ENCODE measurements at regions of chr10 and their contacts with region 1.

Region 1: GRCh38 chr10:72088889-72089575 is 681 bp upstream of the SPOCK2 start:
- DNase-seq: peak in 1 of 5 donors; percentile 78
- H3K4me3 ChIP-seq: peak overlapping the region; percentile 82 to 98
- H3K4me3 Mint-ChIP-seq: peak overlapping the region; percentile 97 to 100 (median 100)
- H3K27ac ChIP-seq: peak overlapping the region; percentile 94
- H3K27ac Mint-ChIP-seq: peak overlapping the region; percentile 97 to 100 (median 100)
- H3K4me1 ChIP-seq: peaks cover 48% of the 10 kb centered on the region
- H3K4me1 Mint-ChIP-seq: peaks cover 31 to 58% (median 43%) of the 10 kb centered on the region in 4 donors
- H3K27me3 ChIP-seq: no peaks in the 10 kb centered on the region
- H3K27me3 Mint-ChIP-seq: peaks cover 0 to 2% of the 10 kb centered on the region in 2 donors

Region 2: DNA sequence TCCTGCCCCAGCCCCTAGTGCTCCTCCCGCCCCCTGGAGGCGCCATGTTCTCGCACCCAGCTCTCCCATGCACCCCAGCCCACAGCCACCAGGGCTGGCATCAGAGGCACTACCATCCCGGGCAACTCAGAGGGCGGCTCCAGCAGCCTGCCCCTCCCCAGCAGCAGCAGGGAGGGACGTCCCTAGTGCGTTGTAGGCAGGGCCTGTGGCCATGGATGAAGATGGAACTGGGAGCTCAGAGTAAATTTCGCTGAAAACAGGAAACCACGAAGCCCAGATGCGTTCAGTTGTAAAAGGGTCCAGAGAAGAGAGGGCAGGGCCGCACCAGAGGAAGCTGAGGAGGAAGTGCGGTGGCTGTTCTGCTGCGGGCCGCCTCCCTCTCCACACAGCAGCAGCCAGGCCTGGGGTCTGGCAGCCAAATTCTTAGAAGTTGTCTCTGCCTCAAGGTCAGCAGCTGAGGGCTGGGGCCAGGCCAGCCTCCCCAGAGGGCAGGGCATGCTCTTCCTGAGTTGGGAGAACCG is 340.3 kb before region 1 on chr10:
- CTCF ChIA-PET with region 1: no interaction called
- POLR2A ChIA-PET with region 1: no interaction called
- intact Hi-C with region 1: loop called (anchors 10 kb)
- DNase-seq: peak; percentile 86 to 90 (median 87)
- H3K4me3 ChIP-seq: peak overlapping the region in 1 of 2 donors; percentile 39
- H3K4me3 Mint-ChIP-seq: peak overlapping the region; percentile 76 to 89 (median 84)
- H3K27ac ChIP-seq: peak overlapping the region; percentile 58
- H3K27ac Mint-ChIP-seq: peak overlapping the region; percentile 92 to 99 (median 98)
- H3K4me1 ChIP-seq: peaks cover 100% of the 10 kb centered on the region
- H3K4me1 Mint-ChIP-seq: peaks cover 74 to 98% (median 92%) of the 10 kb centered on the region in 4 donors
- H3K27me3 ChIP-seq: no peaks in the 10 kb centered on the region
- H3K27me3 Mint-ChIP-seq: no peaks in the 10 kb centered on the region

Region 3: DNA sequence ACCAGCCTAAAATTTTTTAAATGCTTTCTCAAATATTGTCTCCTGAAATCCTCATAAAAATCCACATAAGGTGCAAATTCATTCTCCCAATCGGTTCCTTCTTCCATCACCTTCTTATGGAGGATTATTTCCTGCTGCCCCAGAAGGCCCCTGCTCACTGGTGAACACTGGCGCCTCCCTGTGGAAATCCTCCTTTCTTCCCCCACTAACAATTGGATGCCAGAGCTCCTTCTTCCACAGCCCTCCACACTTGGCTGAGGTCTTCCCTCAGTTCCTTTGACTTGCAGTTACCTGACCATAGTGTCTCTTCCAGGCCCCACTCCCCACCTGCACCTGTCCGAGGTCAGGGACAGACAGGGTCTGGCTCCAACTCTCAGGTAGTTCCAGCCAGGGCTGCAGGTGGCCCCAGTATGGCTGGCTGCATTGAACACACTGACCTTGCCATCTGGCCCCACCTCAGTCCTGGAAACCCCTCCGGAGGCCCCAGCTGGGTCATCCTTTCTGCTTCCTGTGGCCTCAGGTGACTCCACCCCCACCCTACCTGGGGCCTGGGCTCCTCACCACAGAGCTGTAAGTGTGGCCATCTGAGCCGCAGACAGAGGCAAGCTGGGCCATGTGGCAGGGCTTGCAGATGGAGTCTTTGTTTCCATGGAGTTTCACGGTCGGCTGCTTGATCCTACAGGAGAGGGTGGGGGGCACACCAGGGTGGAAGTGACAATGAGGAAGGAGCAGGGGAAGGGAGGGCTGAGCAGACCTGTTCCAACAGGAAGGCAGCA is 19.1 kb before region 1 on chr10:
- CTCF ChIA-PET with region 1: interaction called, 4 read pairs
- POLR2A ChIA-PET with region 1: interaction called, 329 read pairs
- intact Hi-C with region 1: no loop called
- DNase-seq: no peak
- H3K4me3 ChIP-seq: no peak overlapping the region
- H3K4me3 Mint-ChIP-seq: peak overlapping the region in 2 of 8 donors; percentile 9 to 12
- H3K27ac ChIP-seq: no peak overlapping the region
- H3K27ac Mint-ChIP-seq: peak overlapping the region; percentile 39 to 97 (median 91)
- H3K4me1 ChIP-seq: peaks cover 37% of the 10 kb centered on the region
- H3K4me1 Mint-ChIP-seq: peaks cover 12 to 42% (median 28%) of the 10 kb centered on the region in 4 donors
- H3K27me3 ChIP-seq: no peaks in the 10 kb centered on the region
- H3K27me3 Mint-ChIP-seq: no peaks in the 10 kb centered on the region

Region 4: GRCh38 chr10:72114706-72115450 is 25.8 kb after region 1 on chr10:
- CTCF ChIA-PET with region 1: interaction called, 4 read pairs
- POLR2A ChIA-PET with region 1: interaction called, 24 read pairs
- intact Hi-C with region 1: no loop called
- DNase-seq: no peak
- H3K4me3 ChIP-seq: no peak overlapping the region
- H3K4me3 Mint-ChIP-seq: peak overlapping the region in 1 of 8 donors; percentile 7
- H3K27ac ChIP-seq: no peak overlapping the region
- H3K27ac Mint-ChIP-seq: peak overlapping the region in 6 of 7 donors; percentile 18 to 85 (median 60)
- H3K4me1 ChIP-seq: peaks cover 26% of the 10 kb centered on the region
- H3K4me1 Mint-ChIP-seq: peaks cover 26 to 45% (median 36%) of the 10 kb centered on the region in 4 donors
- H3K27me3 ChIP-seq: no peaks in the 10 kb centered on the region
- H3K27me3 Mint-ChIP-seq: no peaks in the 10 kb centered on the region

Region 5: GRCh38 chr10:72215652-72216549 is 126.9 kb after region 1 on chr10 and contains the starts of genes ANAPC16 and ASCC1:
- CTCF ChIA-PET with region 1: interaction called, 9 read pairs
- POLR2A ChIA-PET with region 1: interaction called, 125 read pairs
- intact Hi-C with region 1: loop called (anchors 1 kb)
- DNase-seq: peak; percentile 92 to 98 (median 96)
- H3K4me3 ChIP-seq: peak within 1 kb of the TSS; percentile 70 to 88
- H3K4me3 Mint-ChIP-seq: peak within 1 kb of the TSS; percentile 95 to 100 (median 98)
- H3K27ac ChIP-seq: peak within 1 kb of the TSS; percentile 88
- H3K27ac Mint-ChIP-seq: peak within 1 kb of the TSS; percentile 97 to 100 (median 99)
- H3K4me1 ChIP-seq: peaks cover 47% of the 10 kb centered on the region
- H3K4me1 Mint-ChIP-seq: peaks cover 31 to 58% (median 44%) of the 10 kb centered on the region in 4 donors
- H3K27me3 ChIP-seq: no peaks in the 10 kb centered on the region
- H3K27me3 Mint-ChIP-seq: no peaks in the 10 kb centered on the region
- total RNA-seq, gene ANAPC16: 114 to 118 TPM
- total RNA-seq, gene ASCC1: 14.3 to 17.5 TPM

Region 6: GRCh38 chr10:72260588-72261322 is 171.7 kb after region 1 on chr10:
- CTCF ChIA-PET with region 1: no interaction called
- POLR2A ChIA-PET with region 1: interaction called, 11 read pairs
- intact Hi-C with region 1: no loop called
- DNase-seq: peak; percentile 77 to 92 (median 80)
- H3K4me3 ChIP-seq: peak overlapping the region; percentile 52 to 90
- H3K4me3 Mint-ChIP-seq: peak overlapping the region; percentile 84 to 93 (median 89)
- H3K27ac ChIP-seq: peak overlapping the region; percentile 74
- H3K27ac Mint-ChIP-seq: peak overlapping the region; percentile 95 to 98 (median 96)
- H3K4me1 ChIP-seq: peaks cover 89% of the 10 kb centered on the region
- H3K4me1 Mint-ChIP-seq: peaks cover 49 to 77% (median 63%) of the 10 kb centered on the region in 4 donors
- H3K27me3 ChIP-seq: no peaks in the 10 kb centered on the region
- H3K27me3 Mint-ChIP-seq: no peaks in the 10 kb centered on the region

Region 7: DNA sequence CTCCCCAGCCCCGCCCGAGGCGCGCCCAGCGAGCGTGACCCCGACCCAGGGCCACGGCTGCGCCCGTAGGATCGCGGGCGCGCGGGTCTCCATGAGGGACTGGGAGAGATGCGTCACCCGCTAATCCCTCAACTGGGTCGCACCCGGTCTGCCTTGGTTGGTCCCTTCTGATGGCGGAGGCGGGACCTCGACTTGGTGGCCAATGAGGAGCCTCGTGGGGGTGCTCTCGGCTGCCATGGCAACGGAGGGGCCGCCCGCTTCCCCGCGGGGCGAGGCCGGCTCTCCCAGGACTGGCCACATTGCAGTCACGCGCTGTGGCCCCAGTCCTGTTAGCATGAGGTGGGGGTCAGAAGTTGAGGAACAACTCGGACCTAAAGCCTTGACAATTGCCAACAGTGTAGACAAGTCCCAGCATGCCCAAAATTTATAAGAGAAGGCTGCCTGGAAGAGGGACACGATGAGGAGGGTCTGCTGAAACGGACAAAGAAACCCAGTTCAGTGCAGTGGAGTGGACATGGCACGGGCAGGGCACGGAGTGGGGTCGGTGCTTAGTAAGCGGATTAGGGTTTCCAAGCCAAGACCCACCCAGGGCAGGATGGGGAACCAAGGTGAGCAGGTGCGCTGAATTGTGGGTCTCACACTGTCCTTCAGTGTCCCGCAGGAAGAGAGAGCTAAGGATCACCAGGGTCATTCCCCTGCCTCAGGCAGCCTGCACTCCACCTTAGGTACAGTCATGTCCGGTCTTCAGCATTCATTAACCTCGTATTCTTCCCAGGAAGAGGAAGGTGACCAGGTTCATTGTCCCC is 209.1 kb after region 1 on chr10:
- CTCF ChIA-PET with region 1: no interaction called
- POLR2A ChIA-PET with region 1: interaction called, 29 read pairs
- intact Hi-C with region 1: no loop called
- DNase-seq: peak; percentile 89 to 95 (median 91)
- H3K4me3 ChIP-seq: peak overlapping the region in 1 of 2 donors; percentile 71
- H3K4me3 Mint-ChIP-seq: peak overlapping the region; percentile 29 to 94 (median 86)
- H3K27ac ChIP-seq: peak overlapping the region; percentile 95
- H3K27ac Mint-ChIP-seq: peak overlapping the region; percentile 96 to 100 (median 100)
- H3K4me1 ChIP-seq: peaks cover 56% of the 10 kb centered on the region
- H3K4me1 Mint-ChIP-seq: peaks cover 26 to 67% (median 46%) of the 10 kb centered on the region in 4 donors
- H3K27me3 ChIP-seq: no peaks in the 10 kb centered on the region
- H3K27me3 Mint-ChIP-seq: no peaks in the 10 kb centered on the region

Region 8: GRCh38 chr10:72913287-72913686 is 824.3 kb after region 1 on chr10:
- CTCF ChIA-PET with region 1: no interaction called
- POLR2A ChIA-PET with region 1: no interaction called
- intact Hi-C with region 1: no loop called
- DNase-seq: no peak
- H3K4me3 ChIP-seq: no peak overlapping the region
- H3K4me3 Mint-ChIP-seq: no peak overlapping the region
- H3K27ac ChIP-seq: no peak overlapping the region
- H3K27ac Mint-ChIP-seq: no peak overlapping the region
- H3K4me1 ChIP-seq: no peaks in the 10 kb centered on the region
- H3K4me1 Mint-ChIP-seq: no peaks in the 10 kb centered on the region
- H3K27me3 ChIP-seq: no peaks in the 10 kb centered on the region
- H3K27me3 Mint-ChIP-seq: peaks cover 0 to 2% of the 10 kb centered on the region in 2 donors